ENCODE measurements at regions of chr12 and their contacts with region 1.

Region 1: DNA sequence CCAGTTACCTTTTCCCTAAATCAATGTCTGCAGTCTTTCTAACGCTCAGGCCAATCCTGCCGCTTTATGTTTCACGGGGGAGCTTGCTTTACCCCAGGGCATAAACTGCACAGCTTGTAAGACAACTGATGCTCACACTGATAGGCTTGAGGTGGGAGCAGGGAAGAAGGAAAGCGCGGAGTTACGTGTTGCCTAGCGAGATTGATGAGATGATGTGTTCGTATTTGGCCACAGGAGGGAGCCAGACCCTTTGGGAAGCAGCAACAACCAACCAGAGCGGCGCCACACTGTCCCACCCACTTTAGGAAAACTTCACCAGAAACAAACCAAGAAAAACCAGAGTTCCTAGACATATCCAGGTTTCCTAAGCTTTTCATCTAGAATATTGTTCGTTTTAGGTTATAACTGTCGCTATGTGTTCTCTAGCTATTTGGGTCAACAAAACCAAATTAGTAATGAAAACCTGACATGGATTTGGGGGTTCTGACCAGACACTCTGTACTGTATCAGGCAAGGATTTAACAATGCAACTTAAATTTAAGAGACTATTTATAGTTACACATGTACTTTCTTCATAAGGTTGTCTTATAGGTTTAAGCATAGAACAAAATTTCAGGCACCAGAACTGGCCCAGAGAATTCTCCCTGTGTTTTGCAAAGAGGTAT is 2.4 kb downstream of the IL26 start:
- H3K4me3 ChIP-seq: no peak overlapping the region
- H3K27ac ChIP-seq: no peak overlapping the region
- H3K4me1 ChIP-seq: no peaks in the 10 kb centered on the region
- CTCF ChIP-seq: peak; percentile 92

Region 2: GRCh38 chr12:68040450-68041075 is 182.7 kb before region 1 on chr12:
- CTCF ChIA-PET with region 1: interaction called, 33 read pairs
- POLR2A ChIA-PET with region 1: no interaction called
- H3K4me3 ChIP-seq: no peak overlapping the region
- H3K27ac ChIP-seq: no peak overlapping the region
- H3K4me1 ChIP-seq: no peaks in the 10 kb centered on the region
- CTCF ChIP-seq: peak; percentile 68

Region 3: DNA sequence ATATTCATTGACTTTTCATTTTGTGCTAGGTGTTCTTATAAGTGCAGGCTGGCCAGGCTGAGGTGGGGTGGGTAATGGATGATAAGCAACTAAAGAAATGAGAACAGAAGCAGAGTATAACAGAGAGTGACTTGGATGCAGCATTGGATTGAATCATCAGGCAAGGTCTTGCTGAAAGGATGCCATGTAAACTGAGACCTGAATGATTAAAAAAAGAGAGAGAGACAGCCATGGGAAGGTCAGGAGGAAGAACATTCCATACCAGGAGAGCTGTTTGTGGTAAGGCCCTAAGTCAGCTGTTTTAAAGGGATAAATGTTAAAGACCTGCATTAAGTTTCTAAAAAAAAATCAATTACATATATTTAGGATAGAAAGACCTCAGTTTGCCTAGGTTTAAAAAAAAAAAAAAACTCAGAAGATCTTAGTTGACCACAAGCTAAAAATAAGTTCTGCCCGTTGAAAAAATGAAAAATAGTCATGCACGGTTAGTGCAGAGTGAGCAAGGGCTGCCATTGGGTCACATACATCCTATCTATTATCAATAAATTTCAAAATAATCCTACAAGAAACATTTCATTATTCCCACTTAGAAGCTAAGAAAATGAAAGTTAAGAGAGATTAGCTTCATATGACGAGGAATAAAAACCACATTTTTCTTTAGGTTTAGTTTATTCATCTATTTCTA is 100.8 kb before region 1 on chr12:
- CTCF ChIA-PET with region 1: no interaction called
- POLR2A ChIA-PET with region 1: no interaction called
- H3K4me3 ChIP-seq: no peak overlapping the region
- H3K27ac ChIP-seq: no peak overlapping the region
- H3K4me1 ChIP-seq: 0 out of 2 replicates have a peak, but pooled peaks cover 2% of the 10 kb centered on the region
- CTCF ChIP-seq: no peak

Region 4: GRCh38 chr12:68210875-68211274 is 12.3 kb before region 1 on chr12:
- CTCF ChIA-PET with region 1: interaction called, 12 read pairs
- POLR2A ChIA-PET with region 1: no interaction called
- H3K4me3 ChIP-seq: no peak overlapping the region
- H3K27ac ChIP-seq: no peak overlapping the region
- H3K4me1 ChIP-seq: peaks cover 4% of the 10 kb centered on the region
- CTCF ChIP-seq: no peak

Region 5: GRCh38 chr12:68245180-68246021 is 22.2 kb after region 1 on chr12:
- CTCF ChIA-PET with region 1: interaction called, 11 read pairs
- POLR2A ChIA-PET with region 1: no interaction called
- H3K4me3 ChIP-seq: no peak overlapping the region
- H3K27ac ChIP-seq: peak overlapping the region; percentile 84
- H3K4me1 ChIP-seq: peaks cover 3% of the 10 kb centered on the region
- CTCF ChIP-seq: no peak

Region 6: GRCh38 chr12:68317047-68317667 is 93.9 kb after region 1 on chr12:
- CTCF ChIA-PET with region 1: interaction called, 89 read pairs
- POLR2A ChIA-PET with region 1: interaction called, 6 read pairs
- H3K4me3 ChIP-seq: no peak overlapping the region
- H3K27ac ChIP-seq: no peak overlapping the region
- H3K4me1 ChIP-seq: no peaks in the 10 kb centered on the region
- CTCF ChIP-seq: 0 out of 2 replicates have a peak, but pooled peaks have one; percentile 9